Left colon (tissue), 2 donors: ENCODE measurements at regions of chr11 and their contacts with region 1.

Region 1: GRCh38 chr11:727859-728748 is 19.2 kb upstream of the TALDO1 start:
- DNase-seq: peak; percentile 79 to 91
- ATAC-seq: peak; percentile 72

Region 2: DNA sequence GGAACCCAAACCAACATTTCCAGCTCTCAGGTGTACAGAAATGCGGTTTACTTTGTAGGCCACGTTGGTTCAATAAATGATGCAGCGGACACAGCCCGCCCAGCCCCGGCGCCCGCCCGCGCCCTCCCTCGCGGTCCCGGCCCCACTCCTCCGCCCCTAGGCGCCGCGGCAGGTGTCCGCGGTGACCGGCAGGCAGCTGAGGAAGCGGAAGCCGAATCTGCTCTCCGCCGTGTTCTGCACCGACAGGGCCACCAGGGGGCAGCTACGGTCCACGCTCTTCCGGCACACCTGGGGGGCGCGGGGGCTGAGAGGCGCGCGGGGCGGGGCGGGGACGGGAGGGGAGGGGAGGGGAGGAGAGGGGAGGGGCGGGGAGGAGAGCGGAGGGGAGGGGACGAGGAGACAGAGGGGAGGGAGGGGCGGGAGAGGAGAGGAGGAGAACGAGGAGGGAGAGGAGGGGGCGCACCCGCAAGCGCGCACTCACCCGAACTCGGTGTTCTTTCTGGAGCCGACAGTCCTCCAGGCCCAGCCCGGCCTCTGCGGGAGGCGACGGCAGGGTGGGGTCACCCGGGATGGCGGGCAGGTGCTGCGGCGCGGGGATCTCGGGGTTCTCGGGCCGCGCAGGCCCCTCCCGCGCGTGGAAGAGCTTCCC is 173.2 kb before region 1 on chr11:
- intact Hi-C with region 1: loop called in 1 of 2 experiments (anchors 10 kb)
- DNase-seq: peak in 1 of 2 donors; percentile 85
- ATAC-seq: peak; percentile 71

Region 3: GRCh38 chr11:662689-663274 is 65.3 kb before region 1 on chr11:
- intact Hi-C with region 1: loop called in 1 of 2 experiments (anchors 10 kb)
- DNase-seq: peak; percentile 58 to 84
- ATAC-seq: peak; percentile 92

Region 4: DNA sequence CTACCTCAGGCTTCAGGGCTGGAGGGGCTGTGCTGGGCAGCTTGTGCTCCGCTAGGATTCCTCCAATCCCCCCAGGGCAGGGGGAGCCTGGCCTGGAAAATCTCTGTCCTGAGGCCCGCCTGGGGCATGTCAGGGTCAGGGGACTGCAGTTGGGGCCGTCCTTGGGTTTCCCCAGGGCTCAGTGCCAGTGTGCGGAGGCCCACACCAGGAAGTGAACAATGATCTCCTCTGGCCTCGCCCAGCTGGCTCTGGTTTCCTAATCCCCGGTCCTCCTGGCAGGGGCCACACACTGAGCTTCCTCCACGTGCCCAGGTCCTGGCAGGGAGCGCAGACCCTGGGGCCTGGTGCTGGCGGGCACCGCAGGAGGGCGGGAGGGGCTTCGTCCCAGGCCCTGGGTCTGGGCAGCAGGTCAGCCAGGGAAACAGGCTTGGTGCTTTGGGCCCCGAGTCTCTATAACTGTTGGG is 345.2 kb after region 1 on chr11:
- intact Hi-C with region 1: no loop called
- DNase-seq: peak; percentile 85 to 90
- ATAC-seq: peak; percentile 80